Activated CD4-positive, alpha-beta T cell treated with anti-CD3 and anti-CD28 coated beads for 36 hours (primary cell): ENCODE measurements at regions of chr5 and their contacts with region 1.

Region 1: GRCh38 chr5:71922584-71923106 is 184.6 kb upstream of the MAP1B start:
- DNase-seq: no peak
- ATAC-seq: no peak
- H3K4me3 Mint-ChIP-seq: no peak overlapping the region
- H3K27ac Mint-ChIP-seq: no peak overlapping the region
- H3K4me1 Mint-ChIP-seq: no peaks in the 10 kb centered on the region
- H3K27me3 Mint-ChIP-seq: peaks cover 22% of the 10 kb centered on the region

Region 2: DNA sequence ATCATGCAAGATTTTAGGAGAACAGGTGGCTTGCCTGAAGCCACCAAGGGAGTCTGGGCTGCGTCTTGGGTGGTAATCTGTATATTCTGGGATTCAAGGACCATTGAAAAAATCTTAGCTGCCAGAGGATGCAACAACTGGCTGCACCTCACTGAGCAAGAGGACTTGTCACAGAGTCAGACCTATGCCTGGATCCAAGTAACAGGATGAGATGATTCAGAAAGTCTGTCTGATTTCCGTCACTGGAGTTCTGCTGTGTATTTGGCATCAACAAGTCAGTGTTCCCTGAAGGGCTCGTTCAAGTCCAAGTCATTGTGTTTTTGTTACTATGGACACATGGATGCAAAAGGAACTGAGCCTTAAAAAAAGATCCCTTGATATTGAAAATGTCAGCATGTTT is 241.3 kb before region 1 on chr5:
- CTCF ChIA-PET with region 1: no interaction called
- POLR2A ChIA-PET with region 1: no interaction called
- intact Hi-C with region 1: loop called in 1 of 2 experiments (anchors 10 kb)
- DNase-seq: no peak
- ATAC-seq: no peak
- H3K4me3 Mint-ChIP-seq: no peak overlapping the region
- H3K27ac Mint-ChIP-seq: no peak overlapping the region
- H3K4me1 Mint-ChIP-seq: no peaks in the 10 kb centered on the region
- H3K27me3 Mint-ChIP-seq: peaks cover 37% of the 10 kb centered on the region

Region 3: DNA sequence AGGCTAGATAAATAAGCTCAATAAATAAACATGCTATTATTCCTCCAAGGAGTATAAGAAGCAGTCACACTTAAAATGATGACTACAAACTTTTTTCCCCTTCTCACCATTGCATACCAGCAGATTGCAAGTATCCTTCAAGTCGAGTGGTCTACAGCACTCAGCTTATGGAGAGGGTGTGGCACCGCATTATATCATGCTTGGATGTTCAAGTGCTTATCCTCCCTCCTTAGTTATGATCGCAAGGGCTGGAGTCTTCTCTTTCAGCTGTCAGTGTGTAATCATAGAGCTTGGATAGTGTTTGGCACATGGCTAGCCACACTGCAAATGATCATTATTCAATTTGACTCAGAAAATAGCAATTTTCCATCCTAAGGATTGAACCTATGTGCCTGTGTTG is 79.5 kb before region 1 on chr5:
- CTCF ChIA-PET with region 1: no interaction called
- POLR2A ChIA-PET with region 1: no interaction called
- intact Hi-C with region 1: no loop called
- DNase-seq: no peak
- ATAC-seq: no peak
- H3K4me3 Mint-ChIP-seq: no peak overlapping the region
- H3K27ac Mint-ChIP-seq: no peak overlapping the region
- H3K4me1 Mint-ChIP-seq: no peaks in the 10 kb centered on the region
- H3K27me3 Mint-ChIP-seq: peaks cover 9% of the 10 kb centered on the region